Right ventricle myocardium superior (tissue), 1 donor: ENCODE measurements at regions of chr19 and their contacts with region 1.

Region 1: GRCh38 chr19:17996826-17997316 is 11.1 kb upstream of the ARRDC2 start:
- DNase-seq: peak; percentile 91
- ATAC-seq: peak; percentile 86

Region 2: GRCh38 chr19:17511724-17512573 is 484.9 kb before region 1 on chr19:
- intact Hi-C with region 1: no loop called
- DNase-seq: peak; percentile 93
- ATAC-seq: peak; percentile 82

Region 3: GRCh38 chr19:17938092-17938845 is 58.6 kb before region 1 on chr19:
- intact Hi-C with region 1: loop called (anchors 2 kb)
- DNase-seq: peak; percentile 87
- ATAC-seq: peak; percentile 87